HepG2 (cell line): ENCODE measurements at regions of chr2 and their contacts with region 1.

Region 1: GRCh38 chr2:31333527-31334183 is 80.9 kb downstream of the XDH start:
- DNase-seq: peak; percentile 66
- ATAC-seq: peak; percentile 93
- H3K4me3 ChIP-seq: no peak overlapping the region
- H3K27ac ChIP-seq: no peak overlapping the region
- H3K4me1 ChIP-seq: no peaks in the 10 kb centered on the region
- H3K27me3 ChIP-seq: peaks cover 1 to 8% of the 10 kb centered on the region in 2 experiments; a peak in 4 of 5 replicates
- CTCF ChIP-seq: peak; percentile 95
- EP300 ChIP-seq: no peak
- POLR2A ChIP-seq: no peak
- RAD21 ChIP-seq: peak; percentile 86

Region 2: GRCh38 chr2:30208452-30208851 is 1125.2 kb before region 1 on chr2:
- CTCF ChIA-PET with region 1: no interaction called
- POLR2A ChIA-PET with region 1: no interaction called
- in situ Hi-C with region 1: loop called (anchors 25 kb)
- intact Hi-C with region 1: no loop called
- DNase-seq: peak; percentile 46
- ATAC-seq: peak; percentile 97
- H3K4me3 ChIP-seq: no peak overlapping the region
- H3K27ac ChIP-seq: no peak overlapping the region
- H3K4me1 ChIP-seq: no peaks in the 10 kb centered on the region
- H3K27me3 ChIP-seq: peaks cover 0 to 8% of the 10 kb centered on the region in 2 experiments; a peak in 2 of 5 replicates
- CTCF ChIP-seq: peak; percentile 91
- EP300 ChIP-seq: no peak
- POLR2A ChIP-seq: no peak
- RAD21 ChIP-seq: peak; percentile 82

Region 3: GRCh38 chr2:30862054-30862651 is 471.5 kb before region 1 on chr2:
- CTCF ChIA-PET with region 1: interaction called, 38 read pairs
- POLR2A ChIA-PET with region 1: no interaction called
- in situ Hi-C with region 1: loop called (anchors 5 kb)
- intact Hi-C with region 1: loop called (anchors 1 kb)
- DNase-seq: peak; percentile 79
- ATAC-seq: peak; percentile 90
- H3K4me3 ChIP-seq: no peak overlapping the region
- H3K27ac ChIP-seq: no peak overlapping the region
- H3K4me1 ChIP-seq: no peaks in the 10 kb centered on the region
- H3K27me3 ChIP-seq: peaks cover 0 to 7% of the 10 kb centered on the region in 2 experiments; a peak in 1 of 5 replicates
- CTCF ChIP-seq: peak; percentile 62
- EP300 ChIP-seq: no peak
- POLR2A ChIP-seq: no peak
- RAD21 ChIP-seq: peak; percentile 72

Region 4: GRCh38 chr2:30915486-30915885 is 418.2 kb before region 1 on chr2:
- CTCF ChIA-PET with region 1: no interaction called
- POLR2A ChIA-PET with region 1: no interaction called
- in situ Hi-C with region 1: no loop called
- intact Hi-C with region 1: loop called (anchors 2 kb)
- DNase-seq: peak; percentile 22
- ATAC-seq: peak; percentile 94
- H3K4me3 ChIP-seq: no peak overlapping the region
- H3K27ac ChIP-seq: no peak overlapping the region
- H3K4me1 ChIP-seq: no peaks in the 10 kb centered on the region
- H3K27me3 ChIP-seq: no peaks in the 10 kb centered on the region; a peak in 1 of 5 replicates
- CTCF ChIP-seq: peak; percentile 58
- EP300 ChIP-seq: no peak
- POLR2A ChIP-seq: no peak
- RAD21 ChIP-seq: no peak

Region 5: GRCh38 chr2:31170071-31170698 is 163.5 kb before region 1 on chr2:
- CTCF ChIA-PET with region 1: no interaction called
- POLR2A ChIA-PET with region 1: no interaction called
- in situ Hi-C with region 1: no loop called
- intact Hi-C with region 1: loop called (anchors 1 kb)
- DNase-seq: peak; percentile 52
- ATAC-seq: peak; percentile 96
- H3K4me3 ChIP-seq: no peak overlapping the region
- H3K27ac ChIP-seq: no peak overlapping the region
- H3K4me1 ChIP-seq: no peaks in the 10 kb centered on the region
- H3K27me3 ChIP-seq: no peaks in the 10 kb centered on the region
- CTCF ChIP-seq: peak; percentile 91
- EP300 ChIP-seq: no peak
- POLR2A ChIP-seq: no peak
- RAD21 ChIP-seq: peak; percentile 70

Region 6: GRCh38 chr2:31233741-31234682 is 99.6 kb before region 1 on chr2 and contains the start of gene EHD3:
- CTCF ChIA-PET with region 1: no interaction called
- POLR2A ChIA-PET with region 1: no interaction called
- in situ Hi-C with region 1: no loop called
- intact Hi-C with region 1: loop called (anchors 1 kb)
- DNase-seq: peak; percentile 42
- ATAC-seq: peak; percentile 99
- H3K4me3 ChIP-seq: peak within 1 kb of the TSS in 2 of 3 experiments; percentile 47 to 56; a peak in 4 of 6 replicates
- H3K27ac ChIP-seq: no peak within 1 kb of the TSS
- H3K4me1 ChIP-seq: no peaks in the 10 kb centered on the region
- H3K27me3 ChIP-seq: peaks cover 0 to 23% of the 10 kb centered on the region in 2 experiments; a peak in 3 of 5 replicates
- CTCF ChIP-seq: peak; percentile 39; the same call in 1 of the 2 replicates
- EP300 ChIP-seq: no peak
- POLR2A ChIP-seq: no peak
- RAD21 ChIP-seq: no peak
- total RNA-seq, gene EHD3: 0.69 and 0.70 TPM in 2 replicates

Region 7: DNA sequence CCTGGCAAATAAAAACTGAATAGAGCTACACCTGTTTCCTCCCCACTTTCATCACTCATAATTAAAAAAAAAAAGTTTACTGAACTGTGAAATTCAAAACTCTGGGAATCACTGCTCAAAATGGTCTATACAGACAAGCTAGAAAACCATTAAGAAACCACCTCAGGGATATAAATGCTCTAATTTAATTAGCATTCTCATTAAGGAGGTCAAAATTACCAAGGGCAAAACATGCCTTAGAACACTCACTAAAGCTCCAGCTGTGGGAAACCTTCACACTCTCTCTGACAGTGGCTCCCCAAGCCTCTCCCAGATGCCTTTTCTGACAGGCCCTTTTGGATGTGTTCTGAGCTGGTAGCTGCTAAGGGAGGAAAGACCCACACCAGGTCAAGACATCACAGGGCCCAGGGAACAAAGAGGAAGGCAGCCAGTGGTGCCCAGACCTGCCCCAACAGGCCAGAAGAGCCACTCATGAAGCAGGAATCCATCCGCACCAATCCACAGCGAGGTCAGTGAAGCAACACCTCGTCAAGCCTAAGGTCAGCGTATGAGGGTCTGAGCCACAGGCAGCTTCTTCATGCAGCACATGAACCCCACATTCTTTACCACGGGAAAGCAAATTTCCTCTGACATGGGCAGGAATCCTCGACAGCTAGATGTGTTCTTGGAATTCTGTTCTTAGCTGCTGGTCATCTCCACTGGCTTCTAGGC is 45.3 kb after region 1 on chr2:
- CTCF ChIA-PET with region 1: no interaction called
- POLR2A ChIA-PET with region 1: no interaction called
- in situ Hi-C with region 1: no loop called
- intact Hi-C with region 1: no loop called
- DNase-seq: no peak
- ATAC-seq: no peak; the same call in 2 of the 3 replicates
- H3K4me3 ChIP-seq: no peak overlapping the region
- H3K27ac ChIP-seq: no peak overlapping the region
- H3K4me1 ChIP-seq: no peaks in the 10 kb centered on the region
- H3K27me3 ChIP-seq: peaks cover 1 to 20% of the 10 kb centered on the region in 2 experiments; a peak in 2 of 5 replicates
- CTCF ChIP-seq: no peak
- EP300 ChIP-seq: no peak
- POLR2A ChIP-seq: no peak
- RAD21 ChIP-seq: no peak